Cardiac septum (tissue), 1 donor: ENCODE measurements at regions of chr3 and their contacts with region 1.

Region 1: DNA sequence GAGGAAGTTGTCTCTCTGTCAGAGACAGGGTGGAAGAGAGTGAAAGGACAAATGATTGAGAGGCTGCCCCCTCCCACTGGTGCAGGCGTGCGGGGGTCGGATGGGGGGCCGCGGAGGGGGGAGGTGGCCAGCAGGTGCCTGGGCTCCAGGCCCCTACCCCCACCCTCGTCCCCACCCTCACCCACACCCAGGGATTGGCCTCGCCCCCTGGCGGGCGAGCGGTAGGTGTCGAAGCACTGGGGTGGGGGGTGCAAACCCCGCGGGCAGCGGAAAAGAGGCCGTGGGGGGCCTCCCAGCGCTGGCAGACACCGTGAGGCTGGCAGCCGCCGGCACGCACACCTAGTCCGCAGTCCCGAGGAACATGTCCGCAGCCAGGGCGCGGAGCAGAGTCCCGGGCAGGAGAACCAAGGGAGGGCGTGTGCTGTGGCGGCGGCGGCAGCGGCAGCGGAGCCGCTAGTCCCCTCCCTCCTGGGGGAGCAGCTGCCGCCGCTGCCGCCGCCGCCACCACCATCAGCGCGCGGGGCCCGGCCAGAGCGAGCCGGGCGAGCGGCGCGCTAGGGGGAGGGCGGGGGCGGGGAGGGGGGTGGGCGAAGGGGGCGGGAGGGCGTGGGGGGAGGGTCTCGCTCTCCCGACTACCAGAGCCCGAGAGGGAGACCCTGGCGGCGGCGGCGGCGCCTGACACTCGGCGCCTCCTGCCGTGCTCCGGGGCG is at the start of gene KAT2B:
- DNase-seq: peak; percentile 92
- total RNA-seq, gene KAT2B: 51.3 TPM

Region 2: DNA sequence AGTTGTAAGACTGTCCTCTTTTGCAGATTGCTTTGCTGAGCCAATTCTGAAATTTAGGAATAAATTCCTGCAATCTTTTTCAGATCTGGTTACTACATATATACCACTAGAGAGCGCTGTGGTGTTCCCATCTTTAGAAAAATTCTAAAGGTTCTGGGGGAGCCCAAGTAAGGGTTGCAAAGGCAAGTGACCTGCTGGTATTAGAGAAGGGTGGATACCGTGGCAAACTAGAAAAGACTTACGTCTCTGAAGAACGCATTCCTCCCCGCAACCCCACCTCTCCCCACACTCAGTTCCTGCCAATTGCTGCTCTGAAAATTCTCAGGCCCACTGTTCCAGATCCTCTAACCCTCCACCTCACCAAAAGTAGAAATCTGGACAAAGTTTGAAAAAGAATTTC is 154.5 kb before region 1 on chr3:
- intact Hi-C with region 1: loop called (anchors 5 kb)
- DNase-seq: no peak

Region 3: GRCh38 chr3:19946832-19947548 is 92.9 kb before region 1 on chr3 and contains the start of gene RAB5A:
- intact Hi-C with region 1: loop called (anchors 1 kb)
- DNase-seq: peak; percentile 99
- total RNA-seq, gene RAB5A: 66.0 TPM

Region 4: DNA sequence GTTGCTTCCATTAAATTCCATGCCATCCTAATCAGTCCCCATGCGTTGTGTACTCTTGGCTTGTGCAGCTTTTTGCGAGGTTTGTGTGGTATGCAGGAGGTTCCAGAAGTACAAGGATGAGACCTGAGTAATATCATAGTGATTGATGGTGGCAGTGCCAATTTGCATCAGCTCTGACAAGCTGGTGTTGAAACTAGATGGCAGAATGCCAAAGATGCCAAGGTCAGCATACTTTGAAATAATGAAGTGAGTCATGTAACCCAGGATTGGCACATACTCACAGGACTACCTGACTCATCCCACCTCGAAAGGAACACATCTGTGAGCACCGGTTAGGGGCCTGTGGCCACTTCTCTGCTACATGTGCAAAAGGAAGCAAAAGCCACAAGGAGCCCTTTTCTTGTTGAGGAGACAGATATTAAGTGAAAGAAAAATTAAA is 14.6 kb after region 1 on chr3:
- intact Hi-C with region 1: loop called (anchors 2 kb)
- DNase-seq: peak; percentile 87

Region 5: DNA sequence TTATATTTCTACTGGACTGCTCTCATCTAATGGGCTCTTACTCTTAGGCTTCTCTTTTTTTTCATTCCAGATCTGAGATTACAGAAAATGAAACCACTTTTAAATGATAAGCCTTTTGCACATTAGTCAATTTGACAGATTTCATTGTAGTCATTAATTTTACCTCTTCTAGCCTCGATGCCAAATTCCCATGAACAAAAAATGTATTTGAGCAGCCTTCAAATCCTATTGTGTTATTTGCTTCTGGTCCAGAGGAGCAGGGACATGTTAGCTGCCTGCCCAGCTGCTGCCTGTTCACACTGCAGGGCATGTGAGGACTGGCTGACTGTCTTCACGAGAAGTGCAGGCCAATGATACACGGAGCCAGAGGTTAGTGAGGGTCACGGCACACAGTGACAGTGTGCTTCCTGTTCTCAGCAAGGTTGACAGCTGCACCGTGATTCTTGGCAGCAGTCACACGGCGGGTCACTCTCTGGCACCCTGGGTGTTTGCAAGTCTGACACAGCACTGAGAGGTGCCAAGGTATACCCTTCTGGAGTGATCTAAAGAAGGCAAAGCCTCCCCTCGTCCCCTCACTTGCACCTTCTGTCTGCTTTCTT is 41.1 kb after region 1 on chr3:
- intact Hi-C with region 1: loop called (anchors 5 kb)
- DNase-seq: peak; percentile 86

Region 6: DNA sequence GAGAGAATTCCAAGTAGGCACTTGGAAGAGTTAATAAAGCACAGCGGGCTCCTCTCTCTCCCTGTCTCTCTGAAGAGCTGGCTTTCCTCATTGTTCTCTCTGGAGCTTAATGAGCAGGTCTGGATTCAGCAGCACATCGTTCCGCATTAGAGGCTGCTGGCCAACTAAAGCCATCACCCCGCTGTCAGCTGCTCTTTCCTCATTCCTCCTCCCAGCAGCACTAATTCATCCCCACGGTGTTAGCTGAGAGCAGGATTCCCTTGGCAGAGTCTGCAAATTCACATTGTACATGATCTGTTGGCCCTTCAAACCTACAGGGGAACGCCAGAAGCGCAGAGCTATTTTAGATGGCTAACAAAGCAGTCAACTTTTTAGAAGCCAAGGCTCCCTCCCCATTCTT is 101.9 kb after region 1 on chr3:
- intact Hi-C with region 1: loop called (anchors 5 kb)
- DNase-seq: no peak

Region 7: GRCh38 chr3:20185701-20186598 is 146.0 kb after region 1 on chr3 and contains the start of gene SGO1:
- intact Hi-C with region 1: loop called (anchors 2 kb)
- DNase-seq: peak; percentile 99
- total RNA-seq, gene SGO1: 0.38 TPM